H1 (cell line): ENCODE measurements at regions of chr3 and their contacts with region 1.

Region 1: GRCh38 chr3:14780927-14781507 is 37.7 kb upstream of the FGD5 start:
- DNase-seq: peak; percentile 70 to 85
- H3K4me3 ChIP-seq: no peak overlapping the region
- H3K27ac ChIP-seq: no peak overlapping the region
- H3K4me1 ChIP-seq: peaks cover 2 to 9% (median 6%) of the 10 kb centered on the region in 4 experiments; a peak in 4 of 7 replicates
- H3K27me3 ChIP-seq: no peaks in the 10 kb centered on the region
- CTCF ChIP-seq: peak; percentile 84 to 97 (median 94)
- EP300 ChIP-seq: no peak
- POLR2A ChIP-seq: no peak
- RAD21 ChIP-seq: peak; percentile 93 to 95

Region 2: GRCh38 chr3:14537590-14538447 is 243.2 kb before region 1 on chr3:
- CTCF ChIA-PET with region 1: no interaction called
- POLR2A ChIA-PET with region 1: no interaction called
- DNase-seq: no peak
- H3K4me3 ChIP-seq: no peak overlapping the region
- H3K27ac ChIP-seq: 0 out of 2 replicates have a peak overlapping the region, but pooled peaks have one; percentile 22
- H3K4me1 ChIP-seq: peaks cover 7 to 39% (median 27%) of the 10 kb centered on the region in 4 experiments
- H3K27me3 ChIP-seq: no peaks in the 10 kb centered on the region
- CTCF ChIP-seq: no peak
- EP300 ChIP-seq: no peak
- POLR2A ChIP-seq: no peak
- RAD21 ChIP-seq: no peak

Region 3: GRCh38 chr3:14680716-14681115 is 100.3 kb before region 1 on chr3:
- CTCF ChIA-PET with region 1: interaction called, 129 read pairs
- POLR2A ChIA-PET with region 1: no interaction called
- DNase-seq: no peak
- H3K4me3 ChIP-seq: no peak overlapping the region
- H3K27ac ChIP-seq: no peak overlapping the region
- H3K4me1 ChIP-seq: no peaks in the 10 kb centered on the region
- H3K27me3 ChIP-seq: no peaks in the 10 kb centered on the region
- CTCF ChIP-seq: no peak
- EP300 ChIP-seq: no peak
- POLR2A ChIP-seq: no peak
- RAD21 ChIP-seq: no peak

Region 4: GRCh38 chr3:14725013-14725412 is 56.0 kb before region 1 on chr3:
- CTCF ChIA-PET with region 1: interaction called, 11 read pairs
- POLR2A ChIA-PET with region 1: no interaction called
- DNase-seq: no peak
- H3K4me3 ChIP-seq: no peak overlapping the region
- H3K27ac ChIP-seq: no peak overlapping the region
- H3K4me1 ChIP-seq: no peaks in the 10 kb centered on the region
- H3K27me3 ChIP-seq: no peaks in the 10 kb centered on the region
- CTCF ChIP-seq: no peak
- EP300 ChIP-seq: no peak
- POLR2A ChIP-seq: no peak
- RAD21 ChIP-seq: no peak

Region 5: DNA sequence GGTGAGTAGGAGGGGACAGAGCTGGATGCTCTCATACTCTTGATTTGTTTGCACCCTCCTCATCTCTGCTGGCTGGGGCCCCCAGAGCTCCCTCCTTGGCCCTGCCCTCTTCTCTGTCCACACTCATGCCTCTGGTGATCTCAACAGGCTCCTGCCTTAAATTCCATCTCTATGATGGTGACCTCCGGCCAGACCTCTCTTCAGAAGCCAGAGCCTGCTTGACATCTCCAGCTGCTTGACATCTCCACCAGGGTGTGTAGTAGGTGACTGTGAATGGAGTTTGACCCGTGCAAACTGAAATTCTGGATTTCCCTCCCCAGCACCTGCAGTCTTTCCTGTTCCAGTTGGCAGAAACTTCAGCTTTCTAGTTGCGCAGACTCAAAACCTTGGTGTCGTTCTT is 33.5 kb after region 1 on chr3:
- CTCF ChIA-PET with region 1: interaction called, 16 read pairs
- POLR2A ChIA-PET with region 1: interaction called, 4 read pairs
- DNase-seq: no peak
- H3K4me3 ChIP-seq: no peak overlapping the region
- H3K27ac ChIP-seq: no peak overlapping the region
- H3K4me1 ChIP-seq: peaks cover 0 to 6% (median 3%) of the 10 kb centered on the region in 4 experiments; a peak in 4 of 7 replicates
- H3K27me3 ChIP-seq: peaks cover 7 to 29% (median 24%) of the 10 kb centered on the region in 4 experiments; a peak in 6 of 7 replicates
- CTCF ChIP-seq: no peak
- EP300 ChIP-seq: no peak
- POLR2A ChIP-seq: no peak
- RAD21 ChIP-seq: no peak

Region 6: DNA sequence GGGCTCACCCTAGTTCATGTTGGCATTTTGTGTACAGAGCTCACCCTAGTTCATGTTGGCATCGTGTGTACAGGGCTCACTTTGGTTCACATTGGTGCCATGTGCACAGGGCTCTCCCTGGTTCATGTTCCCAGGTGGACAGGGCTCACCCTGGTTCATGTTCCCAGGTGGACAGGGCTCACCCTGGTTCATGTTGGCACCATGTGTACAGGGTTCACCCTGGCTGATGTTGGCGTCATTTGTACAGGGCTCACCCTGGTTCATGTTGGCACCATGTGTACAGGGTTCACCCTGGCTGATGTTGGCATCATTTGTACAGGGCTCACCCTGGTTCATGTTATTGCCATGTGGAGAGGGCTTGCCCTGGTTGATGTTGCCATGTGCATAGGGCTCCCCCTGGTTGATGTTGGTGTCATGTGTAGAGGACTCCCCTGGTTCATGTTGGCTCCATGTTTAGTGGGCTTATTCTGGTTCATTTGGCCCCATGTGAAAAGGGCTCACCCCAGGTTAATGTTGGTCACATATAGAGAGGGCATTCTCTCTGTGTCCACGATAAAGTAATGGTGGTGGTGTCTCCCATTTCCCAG is 134.7 kb after region 1 on chr3:
- CTCF ChIA-PET with region 1: interaction called, 81 read pairs
- POLR2A ChIA-PET with region 1: interaction called, 3 read pairs
- DNase-seq: no peak
- H3K4me3 ChIP-seq: no peak overlapping the region
- H3K27ac ChIP-seq: no peak overlapping the region
- H3K4me1 ChIP-seq: no peaks in the 10 kb centered on the region; a peak in 2 of 7 replicates
- H3K27me3 ChIP-seq: no peaks in the 10 kb centered on the region
- CTCF ChIP-seq: peak in 2 of 3 experiments; percentile 46 to 52; a peak in 3 of 4 replicates
- EP300 ChIP-seq: no peak
- POLR2A ChIP-seq: no peak
- RAD21 ChIP-seq: peak; percentile 65 to 74